ENCODE measurements at regions of chr1 and their contacts with region 1.

Region 1: GRCh38 chr1:15028102-15028501 is 125.4 kb upstream of the TMEM51 start:
- DNase-seq: peak; percentile 53 to 86
- H3K4me3 ChIP-seq: no peak overlapping the region
- H3K27ac ChIP-seq: peak overlapping the region; percentile 22 to 31
- H3K4me1 ChIP-seq: peaks cover 0 to 22% (median 7%) of the 10 kb centered on the region in 4 donors
- H3K27me3 ChIP-seq: no peaks in the 10 kb centered on the region
- CTCF ChIP-seq: no peak

Region 2: GRCh38 chr1:14915356-14916054 is 112.6 kb before region 1 on chr1:
- intact Hi-C with region 1: loop called (anchors 5 kb)
- DNase-seq: peak in 1 of 2 donors; percentile 50
- H3K4me3 ChIP-seq: no peak overlapping the region
- H3K27ac ChIP-seq: no peak overlapping the region
- H3K4me1 ChIP-seq: peaks cover 0 to 34% (median 23%) of the 10 kb centered on the region in 4 donors
- H3K27me3 ChIP-seq: no peaks in the 10 kb centered on the region
- CTCF ChIP-seq: peak; percentile 76 to 92

Region 3: DNA sequence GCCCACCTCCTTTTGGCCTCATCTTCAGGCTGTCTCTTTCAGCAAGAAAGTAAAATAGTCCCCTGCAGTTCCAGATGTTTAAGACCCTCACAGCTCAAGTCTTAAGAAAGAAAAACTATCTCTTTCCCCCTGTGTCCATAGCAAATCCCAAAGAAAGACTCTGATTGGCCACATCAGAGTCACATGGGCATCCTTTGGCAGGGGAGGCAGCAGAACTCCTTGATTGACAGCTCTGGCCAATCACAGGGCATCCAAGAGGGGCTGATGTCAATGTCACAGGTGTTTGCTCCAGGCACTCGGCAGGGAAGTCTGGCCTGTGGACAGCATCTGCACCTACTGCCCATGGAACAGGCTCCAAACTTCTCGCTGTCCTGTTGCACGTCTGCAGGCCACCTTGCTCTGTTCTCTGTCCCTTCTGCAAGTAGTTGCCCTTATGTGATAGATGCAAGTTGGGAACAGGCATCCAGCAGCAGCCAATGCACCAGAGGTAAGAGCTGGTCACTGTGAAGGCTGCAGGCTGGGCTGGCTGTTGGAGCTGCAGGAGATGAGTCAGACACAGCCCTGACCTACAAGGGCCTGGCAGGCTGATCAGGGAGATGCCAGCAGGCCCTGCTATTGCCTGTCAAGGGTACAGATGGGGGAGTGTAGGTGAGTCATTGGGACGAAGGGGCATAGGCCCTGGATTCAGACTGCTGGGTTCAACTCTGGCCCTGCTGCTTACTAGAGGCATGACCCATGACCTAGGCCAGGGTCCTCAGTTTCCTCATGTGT is 28.6 kb after region 1 on chr1:
- intact Hi-C with region 1: no loop called
- DNase-seq: no peak
- H3K4me3 ChIP-seq: no peak overlapping the region
- H3K27ac ChIP-seq: no peak overlapping the region
- H3K4me1 ChIP-seq: no peaks in the 10 kb centered on the region
- H3K27me3 ChIP-seq: no peaks in the 10 kb centered on the region
- CTCF ChIP-seq: no peak

Measured in tibial artery (tissue), 4 donors.